PC-3 (cell line): ENCODE measurements at regions of chr3 and their contacts with region 1.

Region 1: DNA sequence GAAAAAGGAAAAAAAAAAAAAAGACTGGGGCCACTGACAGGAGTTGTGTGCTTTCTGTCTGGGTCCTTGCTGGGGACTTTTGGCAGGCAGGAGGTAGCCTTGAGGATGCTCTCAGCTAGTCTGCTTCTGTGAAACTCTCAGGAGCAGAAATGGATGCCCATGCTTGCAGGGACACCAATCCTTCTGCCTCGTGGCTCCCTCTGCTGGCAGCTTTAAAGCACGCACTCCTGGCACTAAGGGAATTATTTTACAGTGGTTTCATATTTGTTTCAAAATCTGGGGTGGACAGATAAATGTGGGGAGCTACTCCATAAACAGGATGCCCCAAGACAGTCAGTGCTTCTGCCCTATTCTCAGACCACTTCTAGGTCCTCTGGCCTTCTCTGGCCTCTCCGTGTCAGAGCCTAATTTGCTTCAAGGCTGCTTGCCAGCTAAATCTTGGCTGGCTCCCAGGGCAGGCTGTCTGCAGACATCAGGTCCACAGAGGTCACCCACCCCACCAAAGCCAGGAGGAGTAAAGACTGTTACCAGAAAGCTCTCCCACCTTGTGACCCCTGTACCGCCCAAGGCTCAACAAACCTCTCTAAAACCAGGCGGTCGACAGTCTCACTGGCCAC is 17.1 kb downstream of the TRAIP start:
- DNase-seq: peak; percentile 83
- ATAC-seq: peak; percentile 83
- H3K4me3 ChIP-seq: no peak overlapping the region
- H3K27ac ChIP-seq: no peak overlapping the region
- H3K4me1 ChIP-seq: no peaks in the 10 kb centered on the region
- H3K27me3 ChIP-seq: no peaks in the 10 kb centered on the region
- CTCF ChIP-seq: peak; percentile 97

Region 2: DNA sequence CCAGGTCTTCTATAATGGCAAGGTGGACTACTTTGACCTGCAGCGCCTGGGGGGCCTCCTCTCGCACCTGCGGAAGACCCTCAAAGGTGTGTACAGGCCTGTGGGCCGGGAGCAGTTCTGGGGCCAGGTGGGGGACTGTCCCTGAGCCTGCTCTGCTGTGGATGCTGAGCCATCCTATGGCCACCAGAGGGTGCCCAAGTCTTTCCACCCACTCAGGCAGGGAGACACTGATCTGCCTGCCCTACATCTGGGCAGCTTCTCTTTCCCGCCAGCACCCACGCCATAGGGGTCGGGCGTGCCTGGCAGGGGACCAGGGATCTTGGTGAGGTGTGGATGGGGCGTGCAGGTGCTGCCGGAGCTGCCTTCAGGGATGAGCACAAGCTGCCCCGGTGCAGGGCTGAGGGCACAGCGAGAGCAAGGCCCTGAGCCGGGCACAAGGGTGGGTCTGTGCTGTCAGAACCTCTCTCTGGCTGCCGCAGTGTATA is 135.8 kb before region 1 on chr3:
- CTCF ChIA-PET with region 1: no interaction called
- POLR2A ChIA-PET with region 1: no interaction called
- intact Hi-C with region 1: loop called (anchors 1 kb)
- DNase-seq: peak; percentile 81
- ATAC-seq: peak; percentile 88
- H3K4me3 ChIP-seq: no peak overlapping the region
- H3K27ac ChIP-seq: no peak overlapping the region
- H3K4me1 ChIP-seq: no peaks in the 10 kb centered on the region
- H3K27me3 ChIP-seq: no peaks in the 10 kb centered on the region
- CTCF ChIP-seq: peak; percentile 85

Region 3: DNA sequence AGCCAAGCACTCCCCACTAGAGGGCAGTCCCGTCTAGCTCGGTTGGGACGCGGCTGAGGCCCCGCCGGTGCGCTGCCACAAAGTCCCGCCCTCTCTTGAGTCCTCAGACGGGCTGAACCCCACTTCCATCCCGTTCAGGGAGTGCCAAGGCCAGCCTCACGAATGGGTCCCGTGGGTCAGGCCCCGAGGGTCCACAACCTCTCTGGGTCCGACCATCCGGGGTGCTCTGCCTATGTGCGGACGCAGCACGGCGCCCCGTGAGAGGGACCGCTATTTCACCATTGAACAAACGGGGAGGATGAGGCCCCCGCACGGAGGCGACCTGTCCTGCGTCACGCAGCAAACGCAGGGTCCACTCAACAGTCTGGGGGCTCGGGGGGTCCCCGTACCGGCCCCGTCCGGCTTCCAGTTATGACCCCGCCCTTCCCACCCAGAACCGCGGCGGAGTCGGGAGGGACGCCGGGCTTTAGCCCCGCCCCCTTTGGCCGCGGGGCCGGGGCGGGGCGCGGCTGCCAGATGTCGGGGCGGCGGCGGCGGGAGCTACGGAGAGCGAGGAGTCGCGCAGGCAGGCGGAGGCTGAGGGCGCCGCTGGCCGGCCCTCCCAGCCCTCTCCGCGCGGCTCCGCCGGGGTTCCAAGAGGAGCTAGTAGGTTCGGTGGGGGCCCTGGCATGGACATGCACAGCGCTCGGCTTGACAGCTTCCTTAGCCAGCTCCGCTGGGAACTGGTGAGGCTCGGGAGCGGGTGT is 36.4 kb before region 1 on chr3 and contains the start of gene INKA1:
- CTCF ChIA-PET with region 1: interaction called, 15 read pairs
- POLR2A ChIA-PET with region 1: no interaction called
- intact Hi-C with region 1: loop called (anchors 1 kb)
- DNase-seq: peak; percentile 89
- ATAC-seq: peak; percentile 79
- H3K4me3 ChIP-seq: peak within 1 kb of the TSS; percentile 76
- H3K27ac ChIP-seq: no peak within 1 kb of the TSS
- H3K4me1 ChIP-seq: peaks cover 23% of the 10 kb centered on the region
- H3K27me3 ChIP-seq: no peaks in the 10 kb centered on the region
- CTCF ChIP-seq: peak; percentile 87
- total RNA-seq, gene INKA1: 1.3 and 5.8 TPM in 2 replicates

Region 4: GRCh38 chr3:49906004-49906743 is 66.9 kb after region 1 on chr3:
- CTCF ChIA-PET with region 1: interaction called, 7 read pairs
- POLR2A ChIA-PET with region 1: no interaction called
- intact Hi-C with region 1: loop called (anchors 1 kb)
- DNase-seq: peak; percentile 86
- ATAC-seq: peak; percentile 61
- H3K4me3 ChIP-seq: peak overlapping the region; percentile 58
- H3K27ac ChIP-seq: peak overlapping the region; percentile 99
- H3K4me1 ChIP-seq: peaks cover 52% of the 10 kb centered on the region
- H3K27me3 ChIP-seq: no peaks in the 10 kb centered on the region
- CTCF ChIP-seq: peak; percentile 98